B cell (primary cell): ENCODE measurements at regions of chr1 and their contacts with region 1.

Region 1: DNA sequence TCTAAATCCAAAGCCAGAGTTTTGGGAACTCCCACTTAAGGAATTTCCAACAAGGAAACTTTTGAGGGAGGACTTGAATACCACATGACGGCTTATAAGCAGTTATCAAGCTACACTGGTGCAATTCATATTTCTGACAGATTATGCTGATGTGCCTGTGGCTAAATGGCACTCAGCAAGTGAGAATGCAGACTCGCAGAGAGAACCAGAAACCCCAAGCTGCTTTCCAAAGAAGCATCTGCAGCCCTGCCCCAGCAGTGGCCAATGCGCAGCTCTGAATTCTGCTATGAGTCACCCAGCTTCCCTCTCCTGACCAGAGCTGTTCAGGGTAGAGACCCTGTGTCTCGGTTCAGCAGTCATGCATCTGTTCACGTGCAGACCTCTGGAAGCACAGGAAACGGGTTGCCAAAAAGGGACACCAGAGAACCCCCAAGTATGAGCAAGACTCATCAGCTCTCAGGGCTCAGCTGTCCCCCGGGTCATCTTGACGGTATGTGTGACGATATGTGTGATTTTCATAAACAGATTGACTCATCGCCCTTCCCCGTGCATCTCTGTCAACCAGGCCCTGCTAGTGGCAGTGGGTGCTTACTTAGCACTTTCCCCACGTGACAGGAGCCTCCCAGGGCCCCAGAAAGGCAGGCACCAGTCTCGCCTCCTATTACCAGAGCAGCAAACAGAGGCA is 76.3 kb downstream of the ITPKB start:
- DNase-seq: peak; percentile 96
- ATAC-seq: peak; percentile 88
- H3K4me3 ChIP-seq: peak overlapping the region in 2 of 5 experiments; percentile 1
- H3K4me3 Mint-ChIP-seq: peak overlapping the region; percentile 79
- H3K27ac ChIP-seq: peak overlapping the region; percentile 82 to 84
- H3K27ac Mint-ChIP-seq: peak overlapping the region; percentile 95
- H3K4me1 ChIP-seq: peaks cover 70 to 95% of the 10 kb centered on the region in 2 donors
- H3K4me1 Mint-ChIP-seq: peaks cover 97% of the 10 kb centered on the region
- H3K27me3 ChIP-seq: no peaks in the 10 kb centered on the region
- H3K27me3 Mint-ChIP-seq: no peaks in the 10 kb centered on the region
- CTCF ChIP-seq: no peak

Region 2: DNA sequence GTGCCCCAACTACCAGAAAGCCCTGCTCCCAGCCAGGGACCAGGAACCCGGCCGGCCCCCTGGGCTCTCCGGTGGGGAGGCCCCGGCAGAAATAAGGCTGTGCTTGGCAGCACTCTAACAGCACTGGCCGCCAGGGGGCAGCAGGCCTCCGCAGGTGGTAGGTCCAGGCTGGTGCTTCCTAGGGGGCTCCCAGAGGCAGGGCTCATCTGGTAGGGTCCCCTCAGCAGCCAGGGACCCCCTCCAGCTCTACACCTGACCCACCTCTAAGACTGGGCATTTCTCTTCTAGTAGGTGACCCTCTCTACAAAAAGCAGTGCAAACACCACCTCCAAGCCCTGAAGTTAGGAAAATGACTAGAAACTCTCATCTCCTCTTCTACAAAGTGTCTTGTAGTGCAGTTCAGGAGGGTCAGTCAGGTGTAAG is 28.6 kb before region 1 on chr1:
- CTCF ChIA-PET with region 1: interaction called, 38 read pairs
- POLR2A ChIA-PET with region 1: interaction called, 4 read pairs
- intact Hi-C with region 1: no loop called
- DNase-seq: peak; percentile 88
- ATAC-seq: peak; percentile 76
- H3K4me3 ChIP-seq: no peak overlapping the region
- H3K4me3 Mint-ChIP-seq: peak overlapping the region; percentile 2
- H3K27ac ChIP-seq: peak overlapping the region; percentile 70 to 77
- H3K27ac Mint-ChIP-seq: peak overlapping the region; percentile 43
- H3K4me1 ChIP-seq: peaks cover 37 to 61% of the 10 kb centered on the region in 2 donors
- H3K4me1 Mint-ChIP-seq: peaks cover 58% of the 10 kb centered on the region
- H3K27me3 ChIP-seq: no peaks in the 10 kb centered on the region
- H3K27me3 Mint-ChIP-seq: no peaks in the 10 kb centered on the region
- CTCF ChIP-seq: peak; percentile 98

Region 3: DNA sequence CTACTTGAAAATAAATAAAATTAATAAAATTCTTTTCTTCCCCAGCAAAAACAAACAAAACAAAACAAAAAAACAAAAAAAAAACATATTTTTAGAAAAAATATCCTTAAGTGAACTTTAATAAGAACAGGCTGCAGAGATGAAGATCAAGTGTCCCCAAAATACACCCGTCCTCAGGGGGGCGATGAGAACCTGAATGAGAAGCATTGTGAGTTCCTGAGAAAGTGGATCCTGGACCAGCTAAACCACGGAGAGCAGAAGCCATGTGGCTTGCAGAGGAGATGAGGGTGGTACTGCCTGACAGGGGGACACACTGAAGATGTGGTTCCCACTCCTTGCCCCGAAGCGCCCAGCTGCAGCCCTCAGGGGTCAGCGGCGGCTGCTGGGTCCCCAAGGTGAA is 13.0 kb before region 1 on chr1:
- CTCF ChIA-PET with region 1: interaction called, 36 read pairs
- POLR2A ChIA-PET with region 1: interaction called, 10 read pairs
- intact Hi-C with region 1: loop called (anchors 1 kb)
- DNase-seq: no peak
- ATAC-seq: no peak
- H3K4me3 ChIP-seq: no peak overlapping the region
- H3K4me3 Mint-ChIP-seq: no peak overlapping the region
- H3K27ac ChIP-seq: no peak overlapping the region
- H3K27ac Mint-ChIP-seq: peak overlapping the region; percentile 46
- H3K4me1 ChIP-seq: peaks cover 15 to 21% of the 10 kb centered on the region in 2 donors
- H3K4me1 Mint-ChIP-seq: peaks cover 45% of the 10 kb centered on the region
- H3K27me3 ChIP-seq: no peaks in the 10 kb centered on the region
- H3K27me3 Mint-ChIP-seq: no peaks in the 10 kb centered on the region
- CTCF ChIP-seq: peak; percentile 35

Region 4: GRCh38 chr1:226687426-226687825 is 24.6 kb after region 1 on chr1:
- CTCF ChIA-PET with region 1: interaction called, 48 read pairs
- POLR2A ChIA-PET with region 1: interaction called, 6 read pairs
- intact Hi-C with region 1: loop called (anchors 1 kb)
- DNase-seq: peak; percentile 73
- ATAC-seq: peak; percentile 44
- H3K4me3 ChIP-seq: no peak overlapping the region
- H3K4me3 Mint-ChIP-seq: peak overlapping the region; percentile 74
- H3K27ac ChIP-seq: no peak overlapping the region
- H3K27ac Mint-ChIP-seq: peak overlapping the region; percentile 91
- H3K4me1 ChIP-seq: peaks cover 78 to 93% of the 10 kb centered on the region in 2 donors
- H3K4me1 Mint-ChIP-seq: peaks cover 97% of the 10 kb centered on the region
- H3K27me3 ChIP-seq: no peaks in the 10 kb centered on the region
- H3K27me3 Mint-ChIP-seq: no peaks in the 10 kb centered on the region
- CTCF ChIP-seq: peak; percentile 52

Region 5: DNA sequence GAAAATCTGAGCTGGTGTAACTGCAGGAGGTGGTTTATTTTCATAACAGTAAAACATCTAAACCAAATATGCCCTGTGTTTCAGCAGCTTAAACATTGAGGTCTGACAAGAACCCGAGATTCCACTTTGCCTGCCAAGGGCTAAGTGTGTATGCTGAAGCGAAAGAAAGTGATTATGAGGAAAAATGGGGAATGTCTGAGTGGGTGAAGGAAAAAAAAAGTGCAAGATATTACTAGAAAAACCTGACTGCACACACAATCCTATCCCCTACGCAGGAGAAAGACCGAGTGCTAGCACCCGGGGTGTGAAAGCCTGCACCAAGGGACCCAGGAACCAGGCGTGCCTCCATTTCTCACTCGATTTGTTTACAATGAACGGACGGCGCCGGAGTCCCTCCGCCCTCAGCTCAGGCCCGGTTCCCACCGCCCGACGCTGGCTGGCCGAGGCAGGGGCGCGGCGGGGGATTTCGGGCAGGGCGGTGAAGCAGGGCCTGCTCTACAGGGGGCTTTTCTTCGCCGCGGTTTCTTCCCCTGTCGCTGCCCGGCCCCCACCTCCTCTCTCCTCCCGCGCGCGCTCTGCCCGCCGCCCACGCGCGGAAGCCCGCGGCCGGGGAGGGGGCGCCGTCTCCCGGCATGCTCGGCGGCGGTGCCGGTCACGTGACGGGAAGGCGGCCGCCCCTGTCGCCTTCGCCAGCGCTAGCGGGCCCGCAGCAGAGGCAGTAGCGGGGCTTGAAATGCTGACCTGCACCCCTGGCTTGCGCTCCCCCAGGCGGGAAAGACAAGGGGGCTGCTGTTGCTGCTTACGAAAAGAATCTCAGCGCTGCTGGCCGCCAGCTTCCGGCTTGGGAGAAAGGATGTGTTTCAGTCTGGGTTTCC is 40.4 kb after region 1 on chr1:
- CTCF ChIA-PET with region 1: interaction called, 4 read pairs
- POLR2A ChIA-PET with region 1: no interaction called
- intact Hi-C with region 1: loop called (anchors 1 kb)
- DNase-seq: peak; percentile 94
- ATAC-seq: peak; percentile 85
- H3K4me3 ChIP-seq: peak overlapping the region; percentile 63 to 80 (median 75)
- H3K4me3 Mint-ChIP-seq: peak overlapping the region; percentile 90
- H3K27ac ChIP-seq: peak overlapping the region; percentile 96 to 99
- H3K27ac Mint-ChIP-seq: peak overlapping the region; percentile 93
- H3K4me1 ChIP-seq: peaks cover 46 to 49% of the 10 kb centered on the region in 2 donors
- H3K4me1 Mint-ChIP-seq: peaks cover 55% of the 10 kb centered on the region
- H3K27me3 ChIP-seq: no peaks in the 10 kb centered on the region
- H3K27me3 Mint-ChIP-seq: no peaks in the 10 kb centered on the region
- CTCF ChIP-seq: no peak

Region 6: DNA sequence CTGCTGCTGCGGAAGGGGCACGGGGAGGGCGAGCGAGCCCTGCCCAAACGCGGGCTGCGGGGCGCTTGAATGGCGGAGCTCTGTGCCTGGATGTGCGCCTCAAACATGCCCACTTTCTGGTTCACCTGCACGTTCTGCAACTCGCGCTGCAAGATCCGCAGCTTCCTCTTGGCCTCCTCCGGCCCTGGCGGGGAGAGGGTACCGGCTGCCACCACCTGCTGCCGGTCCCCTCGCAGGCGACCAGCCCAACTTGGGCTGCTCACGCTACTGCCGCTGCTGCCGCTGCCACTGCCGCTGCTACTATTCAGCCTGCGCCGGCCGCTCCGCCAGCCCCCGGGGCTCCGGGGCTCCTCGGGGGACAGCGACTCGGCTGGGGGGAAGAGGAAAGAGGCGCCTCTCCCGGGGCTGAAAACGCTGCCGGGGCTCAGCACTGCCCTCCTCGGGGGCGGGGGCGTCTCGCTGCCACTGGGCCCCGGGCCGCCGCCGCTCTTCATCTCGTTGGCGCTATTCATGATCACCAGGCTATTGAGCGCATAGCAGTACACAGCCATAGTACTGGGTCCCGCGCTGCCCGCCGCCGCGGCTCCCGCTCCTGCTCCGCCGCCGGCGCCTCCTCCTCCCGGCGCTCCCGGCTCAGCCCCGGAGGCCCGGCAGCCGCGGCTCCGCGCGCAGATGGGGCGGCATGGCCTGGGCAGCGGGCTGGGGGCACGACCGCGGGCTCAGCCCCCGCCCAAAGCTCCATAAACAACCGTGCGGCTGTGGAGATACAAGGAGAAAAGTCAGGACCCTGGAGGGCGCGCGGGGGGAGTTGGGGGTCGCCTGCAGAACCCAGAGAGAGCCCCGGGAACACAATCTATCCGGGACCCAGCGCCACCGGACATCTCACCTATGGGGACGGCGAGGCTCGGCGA is 74.4 kb after region 1 on chr1:
- CTCF ChIA-PET with region 1: interaction called, 4 read pairs
- POLR2A ChIA-PET with region 1: interaction called, 4 read pairs
- intact Hi-C with region 1: loop called (anchors 1 kb)
- DNase-seq: peak; percentile 81
- ATAC-seq: peak; percentile 46
- H3K4me3 ChIP-seq: peak overlapping the region; percentile 82 to 97 (median 87)
- H3K4me3 Mint-ChIP-seq: peak overlapping the region; percentile 90
- H3K27ac ChIP-seq: peak overlapping the region in 1 of 2 donors; percentile 78
- H3K27ac Mint-ChIP-seq: no peak overlapping the region
- H3K4me1 ChIP-seq: peaks cover 67 to 70% of the 10 kb centered on the region in 2 donors
- H3K4me1 Mint-ChIP-seq: peaks cover 66% of the 10 kb centered on the region
- H3K27me3 ChIP-seq: no peaks in the 10 kb centered on the region
- H3K27me3 Mint-ChIP-seq: no peaks in the 10 kb centered on the region
- CTCF ChIP-seq: peak; percentile 33

Region 7: GRCh38 chr1:227197064-227197463 is 534.3 kb after region 1 on chr1:
- CTCF ChIA-PET with region 1: no interaction called
- POLR2A ChIA-PET with region 1: no interaction called
- intact Hi-C with region 1: no loop called
- DNase-seq: no peak
- ATAC-seq: no peak
- H3K4me3 ChIP-seq: no peak overlapping the region
- H3K4me3 Mint-ChIP-seq: no peak overlapping the region
- H3K27ac ChIP-seq: no peak overlapping the region
- H3K27ac Mint-ChIP-seq: no peak overlapping the region
- H3K4me1 ChIP-seq: no peaks in the 10 kb centered on the region
- H3K4me1 Mint-ChIP-seq: no peaks in the 10 kb centered on the region
- H3K27me3 ChIP-seq: no peaks in the 10 kb centered on the region
- H3K27me3 Mint-ChIP-seq: peaks cover 4% of the 10 kb centered on the region
- CTCF ChIP-seq: no peak